ENCODE measurements at regions of chr17 and their contacts with region 1.

Region 1: DNA sequence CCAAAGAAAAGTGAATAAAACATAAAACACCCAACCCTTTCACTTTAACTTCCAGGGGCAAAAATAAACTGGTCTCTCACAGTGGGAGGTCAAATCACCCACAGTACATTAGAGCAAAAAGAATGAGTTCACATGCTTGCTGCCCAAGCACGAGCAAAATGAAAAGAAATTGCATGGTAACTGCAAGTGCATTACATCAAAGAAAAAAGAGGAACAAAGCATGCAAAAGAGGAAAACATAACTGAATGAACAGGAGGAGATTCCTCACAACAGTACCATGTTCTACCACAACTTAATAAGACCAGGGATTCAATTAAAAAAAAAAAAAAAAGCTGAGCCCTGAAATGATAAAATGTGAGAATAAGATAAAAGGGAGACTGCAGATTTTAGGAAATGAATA is 12.3 kb downstream of the DNAH2 start:
- DNase-seq: no peak
- ATAC-seq: no peak
- H3K4me3 ChIP-seq: no peak overlapping the region
- H3K4me3 Mint-ChIP-seq: no peak overlapping the region
- H3K27ac ChIP-seq: no peak overlapping the region
- H3K27ac Mint-ChIP-seq: no peak overlapping the region
- H3K4me1 ChIP-seq: peaks cover 4 to 6% of the 10 kb centered on the region in 2 donors
- H3K4me1 Mint-ChIP-seq: peaks cover 6% of the 10 kb centered on the region
- H3K27me3 ChIP-seq: peaks cover 0 to 5% (median 0%) of the 10 kb centered on the region in 4 experiments
- H3K27me3 Mint-ChIP-seq: peaks cover 22% of the 10 kb centered on the region
- CTCF ChIP-seq: no peak

Region 2: DNA sequence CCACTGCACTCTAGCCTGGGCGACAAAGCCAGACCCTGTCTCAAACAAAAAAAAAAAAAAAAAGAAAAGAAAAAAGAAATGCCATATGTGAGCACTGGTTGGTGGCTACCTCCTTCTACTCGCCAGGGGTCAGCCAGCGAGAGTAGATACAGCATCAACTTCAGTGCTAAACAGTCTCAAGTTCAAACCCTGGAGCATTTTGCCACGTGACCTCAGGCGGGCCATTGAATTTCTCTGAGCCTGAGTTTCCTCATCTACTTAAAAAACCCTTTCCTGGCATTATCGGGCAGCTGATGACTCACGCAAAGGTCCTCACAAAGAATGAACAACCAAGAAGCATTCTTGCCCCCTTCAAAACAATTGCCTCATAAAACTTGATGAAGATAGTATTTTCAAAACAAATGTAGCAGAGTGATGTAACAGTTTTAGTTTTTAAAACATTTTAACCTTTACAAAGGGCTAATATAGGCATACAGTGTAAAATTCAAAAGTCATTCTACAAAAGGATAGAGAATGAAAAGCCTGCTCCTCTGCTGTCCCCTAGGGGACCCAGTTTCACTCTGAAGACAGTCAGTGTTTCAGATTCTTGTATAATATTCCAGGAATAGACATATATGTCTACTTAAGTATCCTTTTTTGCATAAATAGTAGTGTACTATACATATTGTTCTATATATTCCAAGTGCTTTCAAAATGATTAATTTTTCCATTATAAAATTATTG is 16.1 kb after region 1 on chr17:
- CTCF ChIA-PET with region 1: interaction called, 10 read pairs
- POLR2A ChIA-PET with region 1: no interaction called
- intact Hi-C with region 1: no loop called
- DNase-seq: no peak
- ATAC-seq: no peak
- H3K4me3 ChIP-seq: no peak overlapping the region
- H3K4me3 Mint-ChIP-seq: no peak overlapping the region
- H3K27ac ChIP-seq: no peak overlapping the region
- H3K27ac Mint-ChIP-seq: no peak overlapping the region
- H3K4me1 ChIP-seq: no peaks in the 10 kb centered on the region
- H3K4me1 Mint-ChIP-seq: no peaks in the 10 kb centered on the region
- H3K27me3 ChIP-seq: no peaks in the 10 kb centered on the region
- H3K27me3 Mint-ChIP-seq: peaks cover 25% of the 10 kb centered on the region
- CTCF ChIP-seq: no peak

Region 3: DNA sequence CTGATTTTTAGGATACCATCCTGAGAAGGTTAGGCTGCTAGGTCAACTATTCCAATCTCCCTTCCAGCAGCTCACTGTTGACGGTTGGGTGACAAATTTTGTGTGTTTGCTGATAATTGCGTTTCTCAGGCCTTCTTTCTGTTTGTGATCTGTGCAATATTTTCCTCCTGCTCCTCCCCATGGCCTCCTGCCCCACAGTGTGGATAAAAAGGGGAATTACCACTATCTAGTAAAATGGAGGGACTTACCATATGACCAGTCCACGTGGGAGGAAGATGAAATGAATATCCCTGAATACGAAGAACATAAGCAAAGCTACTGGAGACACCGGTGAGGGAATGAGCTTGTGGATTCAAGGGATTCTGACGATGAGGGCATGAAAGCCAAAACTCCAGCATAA is 168.0 kb after region 1 on chr17:
- CTCF ChIA-PET with region 1: no interaction called
- POLR2A ChIA-PET with region 1: no interaction called
- intact Hi-C with region 1: no loop called
- DNase-seq: peak; percentile 33
- ATAC-seq: peak; percentile 39
- H3K4me3 ChIP-seq: no peak overlapping the region
- H3K4me3 Mint-ChIP-seq: no peak overlapping the region
- H3K27ac ChIP-seq: no peak overlapping the region
- H3K27ac Mint-ChIP-seq: no peak overlapping the region
- H3K4me1 ChIP-seq: no peaks in the 10 kb centered on the region
- H3K4me1 Mint-ChIP-seq: no peaks in the 10 kb centered on the region
- H3K27me3 ChIP-seq: no peaks in the 10 kb centered on the region
- H3K27me3 Mint-ChIP-seq: no peaks in the 10 kb centered on the region
- CTCF ChIP-seq: no peak